Aorta (tissue), 5 donors: ENCODE measurements at regions of chr12 and their contacts with region 1.

Region 1: DNA sequence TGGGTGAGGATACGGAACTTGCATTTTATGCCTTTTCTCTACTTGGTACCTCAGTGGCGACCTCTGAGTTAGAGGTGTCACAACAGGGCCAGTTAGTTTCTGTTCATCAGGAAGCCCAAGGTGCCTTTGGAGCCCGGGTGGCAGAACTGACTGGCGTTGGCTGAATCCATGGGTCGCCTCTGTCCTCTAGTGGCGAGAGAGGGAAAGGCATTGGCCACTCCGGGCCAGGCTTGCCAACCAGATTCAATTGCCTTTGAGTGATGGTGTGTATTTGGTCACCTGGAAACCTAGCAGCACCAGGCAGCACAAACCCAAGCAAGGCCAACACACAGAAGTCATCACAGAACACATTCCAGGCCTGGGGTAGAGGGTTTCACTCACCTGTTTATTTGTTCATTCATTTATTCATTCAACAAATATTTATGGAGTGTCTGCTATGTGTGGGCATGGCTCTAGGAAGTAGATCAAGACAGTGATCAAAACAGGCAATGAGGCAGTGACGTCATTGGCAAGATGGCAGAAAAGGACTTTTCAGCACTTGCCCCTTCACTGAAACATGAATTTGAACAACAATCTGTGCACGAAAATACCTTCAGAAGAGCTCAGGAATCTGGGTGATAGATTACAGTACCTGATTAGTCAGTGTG is 40.5 kb upstream of the KCNA5 start:
- DNase-seq: peak; percentile 78 to 89
- ATAC-seq: peak; percentile 83
- H3K4me3 ChIP-seq: no peak overlapping the region
- H3K27ac ChIP-seq: no peak overlapping the region
- H3K4me1 ChIP-seq: no peaks in the 10 kb centered on the region
- H3K27me3 ChIP-seq: no peaks in the 10 kb centered on the region

Region 2: GRCh38 chr12:4857472-4858291 is 145.5 kb before region 1 on chr12:
- intact Hi-C with region 1: loop called (anchors 1 to 2 kb)
- DNase-seq: peak; percentile 72 to 89
- ATAC-seq: peak; percentile 80
- H3K4me3 ChIP-seq: no peak overlapping the region
- H3K27ac ChIP-seq: no peak overlapping the region
- H3K4me1 ChIP-seq: no peaks in the 10 kb centered on the region
- H3K27me3 ChIP-seq: no peaks in the 10 kb centered on the region

Region 3: DNA sequence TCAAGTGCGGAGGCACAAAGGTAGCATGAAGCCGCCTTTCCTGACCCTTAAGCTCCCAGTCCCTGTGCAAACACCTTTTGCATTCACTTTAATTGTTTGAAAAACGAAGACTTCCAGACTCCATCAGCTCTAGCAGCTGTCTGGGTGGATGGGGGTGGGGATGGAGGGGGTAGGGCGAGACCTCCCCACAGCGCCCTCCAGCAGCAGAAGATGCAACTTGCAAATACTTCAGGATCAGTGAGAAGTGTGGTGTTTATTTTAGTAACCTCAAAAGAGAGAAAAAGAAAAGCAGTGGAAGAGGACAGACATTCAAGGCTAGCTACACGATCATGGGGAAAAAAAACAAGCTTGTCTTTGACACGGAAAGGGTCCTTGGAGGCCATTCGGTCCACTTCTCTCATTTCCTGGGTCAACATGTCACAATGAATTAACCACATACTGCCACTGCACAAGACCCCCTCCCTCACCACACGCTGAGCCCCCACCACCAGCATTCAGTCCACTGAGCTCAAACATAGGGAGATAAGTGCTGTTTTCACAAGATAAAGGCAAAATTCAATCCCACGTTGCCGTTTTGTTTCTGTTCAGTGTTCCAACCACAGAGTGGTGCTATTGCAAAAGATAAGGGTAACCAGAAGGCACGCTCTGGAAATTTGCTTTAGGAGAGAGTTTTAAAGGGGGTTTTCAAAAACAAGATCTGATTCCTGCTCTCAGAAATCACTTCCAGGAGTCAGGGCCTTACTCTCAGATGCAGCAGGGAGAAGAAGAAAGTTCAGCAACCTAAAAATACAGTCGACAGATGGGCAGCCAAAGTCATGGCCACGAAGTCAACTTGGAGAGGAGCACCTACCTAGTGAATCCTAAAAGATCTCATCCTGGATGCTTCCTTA is 425.4 kb after region 1 on chr12:
- intact Hi-C with region 1: no loop called
- DNase-seq: no peak
- ATAC-seq: no peak
- H3K4me3 ChIP-seq: no peak overlapping the region
- H3K27ac ChIP-seq: no peak overlapping the region
- H3K4me1 ChIP-seq: no peaks in the 10 kb centered on the region
- H3K27me3 ChIP-seq: no peaks in the 10 kb centered on the region